ENCODE measurements at regions of chr11 and their contacts with region 1.

Region 1: DNA sequence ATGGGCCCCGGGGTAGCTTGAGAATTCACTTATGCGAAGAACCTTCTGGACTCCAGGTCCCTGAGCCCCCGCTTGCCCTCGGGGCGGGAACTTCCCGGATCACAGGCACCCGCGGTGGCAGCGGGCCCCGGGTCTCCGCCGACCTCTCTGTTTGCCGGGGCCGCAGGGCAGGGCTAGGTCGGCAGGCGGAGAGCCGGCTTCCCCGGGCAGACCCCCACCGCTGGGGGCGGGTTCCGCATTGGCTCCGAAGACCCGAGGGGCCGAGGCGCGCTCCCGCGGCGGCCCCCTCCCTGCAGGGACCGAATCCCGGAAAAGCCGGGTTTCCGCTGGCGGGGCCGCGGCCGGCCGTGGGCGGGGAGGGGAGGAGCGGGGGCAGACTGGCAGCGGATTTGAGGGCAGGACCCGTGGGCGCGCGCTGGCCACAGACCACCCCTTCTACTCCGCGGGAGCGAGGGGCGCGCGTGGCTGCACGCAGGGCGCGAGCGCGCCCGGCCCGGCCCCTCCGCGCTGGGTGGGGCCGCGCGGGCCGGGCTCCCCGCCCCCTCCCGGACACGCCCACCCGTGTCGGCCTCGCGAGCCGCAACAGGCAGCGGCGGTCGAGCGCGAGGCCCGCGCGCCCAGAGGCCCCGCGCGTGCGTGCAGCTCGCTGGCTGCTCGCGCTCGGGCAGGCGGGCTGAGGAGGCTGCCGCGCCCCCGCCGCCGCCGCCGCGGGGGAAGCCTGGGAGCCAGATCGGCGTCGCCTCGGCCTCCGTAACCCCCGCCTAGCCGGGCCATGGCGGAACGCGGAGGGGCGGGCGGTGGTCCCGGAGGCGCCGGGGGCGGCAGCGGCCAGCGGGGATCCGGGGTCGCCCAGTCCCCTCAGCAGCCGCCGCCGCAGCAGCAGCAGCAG is at the start of gene PACS1:
- DNase-seq: peak; percentile 85
- ATAC-seq: peak; percentile 69
- H3K4me3 Mint-ChIP-seq: peak within 1 kb of the TSS; percentile 89
- H3K27ac Mint-ChIP-seq: peak within 1 kb of the TSS; percentile 88
- H3K4me1 Mint-ChIP-seq: peaks cover 68% of the 10 kb centered on the region
- H3K27me3 Mint-ChIP-seq: no peaks in the 10 kb centered on the region
- total RNA-seq, gene PACS1: 84.6 to 91.6 TPM

Region 2: GRCh38 chr11:66022401-66023185 is 47.4 kb before region 1 on chr11:
- CTCF ChIA-PET with region 1: interaction called, 11 read pairs
- POLR2A ChIA-PET with region 1: no interaction called
- DNase-seq: peak; percentile 84
- ATAC-seq: peak; percentile 93
- H3K4me3 Mint-ChIP-seq: peak overlapping the region; percentile 2
- H3K27ac Mint-ChIP-seq: no peak overlapping the region
- H3K4me1 Mint-ChIP-seq: peaks cover 22% of the 10 kb centered on the region
- H3K27me3 Mint-ChIP-seq: no peaks in the 10 kb centered on the region

Region 3: GRCh38 chr11:66051766-66052663 is 17.9 kb before region 1 on chr11 and contains the start of gene SF3B2:
- CTCF ChIA-PET with region 1: interaction called, 81 read pairs
- POLR2A ChIA-PET with region 1: interaction called, 26 read pairs
- DNase-seq: peak; percentile 98
- ATAC-seq: peak; percentile 98
- H3K4me3 Mint-ChIP-seq: peak within 1 kb of the TSS; percentile 100
- H3K27ac Mint-ChIP-seq: peak within 1 kb of the TSS; percentile 99
- H3K4me1 Mint-ChIP-seq: peaks cover 37% of the 10 kb centered on the region
- H3K27me3 Mint-ChIP-seq: peaks cover 11% of the 10 kb centered on the region
- total RNA-seq, gene SF3B2: 241 to 253 TPM

Region 4: GRCh38 chr11:66100272-66101065 is 30.5 kb after region 1 on chr11:
- CTCF ChIA-PET with region 1: interaction called, 15 read pairs
- POLR2A ChIA-PET with region 1: interaction called, 3 read pairs
- DNase-seq: peak; percentile 84
- ATAC-seq: peak; percentile 97
- H3K4me3 Mint-ChIP-seq: peak overlapping the region; percentile 77
- H3K27ac Mint-ChIP-seq: peak overlapping the region; percentile 95
- H3K4me1 Mint-ChIP-seq: peaks cover 45% of the 10 kb centered on the region
- H3K27me3 Mint-ChIP-seq: no peaks in the 10 kb centered on the region

Region 5: DNA sequence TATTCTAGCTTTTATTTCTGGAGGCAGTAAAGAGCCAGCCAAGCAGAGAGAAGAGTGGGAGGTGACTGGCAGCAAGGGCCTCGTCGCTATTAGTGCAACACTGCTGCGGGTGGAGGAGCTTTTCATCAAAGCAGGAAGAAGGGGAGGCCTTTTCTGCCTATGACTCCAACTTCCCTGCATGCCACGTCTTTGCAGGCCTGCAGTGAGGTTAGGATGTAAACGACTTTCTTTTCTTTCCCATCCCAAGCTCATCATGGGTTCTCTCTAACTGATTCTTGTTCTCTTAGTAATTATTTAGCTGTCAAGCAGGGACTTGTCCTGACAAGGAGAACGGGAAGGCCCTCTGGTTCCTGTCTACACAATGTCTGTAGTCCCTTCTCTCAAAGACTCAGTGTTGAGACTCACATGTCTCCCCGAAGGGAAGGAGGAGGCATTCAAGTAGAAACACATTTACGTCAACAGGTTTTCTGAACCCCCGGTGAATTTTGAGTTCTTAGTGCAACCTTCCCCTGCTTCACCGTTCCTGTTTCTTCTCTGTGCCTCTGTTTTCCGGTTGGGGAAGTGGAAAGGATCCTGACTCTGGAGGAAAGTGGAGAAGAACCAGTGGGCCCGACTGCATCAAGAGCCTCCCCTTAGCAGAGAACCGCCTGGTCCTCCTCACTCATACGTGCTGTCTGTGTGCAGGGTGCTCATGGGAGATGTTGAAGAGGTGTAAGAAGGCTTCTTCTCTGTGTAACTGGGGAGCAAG is 57.0 kb after region 1 on chr11:
- CTCF ChIA-PET with region 1: interaction called, 25 read pairs
- POLR2A ChIA-PET with region 1: no interaction called
- DNase-seq: peak; percentile 73
- ATAC-seq: peak; percentile 88
- H3K4me3 Mint-ChIP-seq: peak overlapping the region; percentile 51
- H3K27ac Mint-ChIP-seq: peak overlapping the region; percentile 91
- H3K4me1 Mint-ChIP-seq: peaks cover 58% of the 10 kb centered on the region
- H3K27me3 Mint-ChIP-seq: no peaks in the 10 kb centered on the region

Measured in activated CD8-positive, alpha-beta T cell treated with anti-CD3 and anti-CD28 coated beads, Interleukin-2, amount 10 ng/mL, durations not matched to agents 7 days and 5 days (primary cell).